Posterior cingulate gyrus (tissue), 11 donors: ENCODE measurements at regions of chr14 and their contacts with region 1.

Region 1: GRCh38 chr14:64636208-64636979 is 67.8 kb upstream of the PLEKHG3 start:
- DNase-seq: peak; percentile 52 to 96 (median 77)

Region 2: DNA sequence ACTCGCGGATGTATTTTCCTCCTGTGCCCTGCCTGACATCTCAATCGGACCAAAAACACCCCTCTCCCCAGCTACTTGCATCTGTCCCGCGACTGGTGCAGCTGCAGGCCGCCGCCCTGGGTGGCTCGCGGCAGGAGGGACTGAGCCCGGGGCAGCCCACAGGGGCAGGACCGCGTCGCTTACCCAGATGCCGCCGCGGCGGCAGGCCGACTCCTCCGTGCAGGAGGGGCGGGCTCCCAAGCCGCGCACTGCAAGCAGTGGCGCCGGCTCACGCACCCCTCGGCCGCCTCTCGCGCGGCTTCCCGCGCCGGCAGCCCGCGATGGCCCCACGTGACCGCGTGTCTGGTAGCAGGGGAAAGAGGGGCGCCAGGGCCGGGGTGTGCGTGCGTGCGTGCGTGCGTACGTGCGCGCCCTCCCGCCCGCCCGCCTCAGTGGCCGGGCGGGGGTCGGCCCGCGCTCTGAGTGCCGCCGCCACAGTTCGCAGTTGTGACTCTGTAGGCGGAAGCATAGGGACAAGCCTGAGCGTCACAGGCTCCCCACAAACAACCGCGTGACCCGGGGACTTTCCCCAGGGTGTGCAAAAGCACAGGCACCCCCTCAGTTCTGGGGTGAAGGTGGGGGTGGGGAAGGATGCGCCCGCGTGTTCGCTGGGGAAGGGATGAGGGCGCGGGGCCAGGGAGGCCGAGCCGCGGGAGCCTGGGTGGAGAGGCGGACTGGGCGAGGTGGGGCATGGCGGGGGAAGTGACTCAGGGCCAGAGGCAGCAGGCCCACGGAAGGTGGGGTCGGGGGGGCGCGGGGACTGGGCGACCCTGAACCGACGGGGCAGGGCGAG is 132.7 kb before region 1 on chr14 and contains the start of gene ZBTB25:
- intact Hi-C with region 1: loop called (anchors 10 kb)
- DNase-seq: peak; percentile 79 to 99 (median 92)

Region 3: DNA sequence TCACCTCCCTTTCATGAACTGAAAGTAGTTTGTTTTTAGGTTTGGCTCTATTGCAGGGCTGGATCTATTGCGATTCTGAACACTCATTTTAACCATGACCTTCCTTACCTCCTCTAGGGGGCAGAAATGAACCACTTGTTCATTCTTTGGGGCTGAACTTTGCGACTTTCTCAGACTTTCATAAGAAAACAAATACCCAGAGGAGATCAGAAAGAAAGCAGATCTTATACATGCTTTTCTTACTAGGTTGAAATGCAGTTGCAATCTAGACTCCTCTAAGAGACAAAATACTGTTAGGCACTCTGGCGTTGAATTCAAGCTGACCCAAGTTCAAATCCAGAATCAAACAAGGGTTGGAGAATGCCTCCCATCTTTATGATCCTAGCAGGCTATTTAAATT is 35.2 kb after region 1 on chr14:
- intact Hi-C with region 1: no loop called
- DNase-seq: no peak